ENCODE measurements at regions of chr1 and their contacts with region 1.

Region 1: GRCh38 chr1:206469933-206470691 is at the start of gene IKBKE:
- DNase-seq: no peak
- ATAC-seq: peak; percentile 73
- H3K4me3 ChIP-seq: peak within 1 kb of the TSS; percentile 94
- H3K27ac ChIP-seq: peak within 1 kb of the TSS; percentile 88
- H3K4me1 ChIP-seq: peaks cover 66% of the 10 kb centered on the region
- H3K27me3 ChIP-seq: no peaks in the 10 kb centered on the region
- CTCF ChIP-seq: peak; percentile 7 to 22 (median 17); a peak in 1 of 6 replicates
- EP300 ChIP-seq: no peak
- POLR2A ChIP-seq: peak; percentile 68
- RAD21 ChIP-seq: no peak
- polyA plus RNA-seq, gene IKBKE: 12.8 to 19.2 TPM

Region 2: GRCh38 chr1:206446688-206447421 is 23.3 kb before region 1 on chr1:
- CTCF ChIA-PET with region 1: interaction called, 3 read pairs
- POLR2A ChIA-PET with region 1: interaction called, 10 read pairs
- RAD21 ChIA-PET with region 1: no interaction called
- SMC1A ChIA-PET with region 1: no interaction called
- in situ Hi-C with region 1: no loop called
- intact Hi-C with region 1: no loop called
- DNase-seq: no peak
- ATAC-seq: no peak
- H3K4me3 ChIP-seq: no peak overlapping the region
- H3K27ac ChIP-seq: no peak overlapping the region
- H3K4me1 ChIP-seq: no peaks in the 10 kb centered on the region
- H3K27me3 ChIP-seq: no peaks in the 10 kb centered on the region
- CTCF ChIP-seq: no peak
- EP300 ChIP-seq: no peak
- POLR2A ChIP-seq: no peak
- RAD21 ChIP-seq: no peak

Region 3: DNA sequence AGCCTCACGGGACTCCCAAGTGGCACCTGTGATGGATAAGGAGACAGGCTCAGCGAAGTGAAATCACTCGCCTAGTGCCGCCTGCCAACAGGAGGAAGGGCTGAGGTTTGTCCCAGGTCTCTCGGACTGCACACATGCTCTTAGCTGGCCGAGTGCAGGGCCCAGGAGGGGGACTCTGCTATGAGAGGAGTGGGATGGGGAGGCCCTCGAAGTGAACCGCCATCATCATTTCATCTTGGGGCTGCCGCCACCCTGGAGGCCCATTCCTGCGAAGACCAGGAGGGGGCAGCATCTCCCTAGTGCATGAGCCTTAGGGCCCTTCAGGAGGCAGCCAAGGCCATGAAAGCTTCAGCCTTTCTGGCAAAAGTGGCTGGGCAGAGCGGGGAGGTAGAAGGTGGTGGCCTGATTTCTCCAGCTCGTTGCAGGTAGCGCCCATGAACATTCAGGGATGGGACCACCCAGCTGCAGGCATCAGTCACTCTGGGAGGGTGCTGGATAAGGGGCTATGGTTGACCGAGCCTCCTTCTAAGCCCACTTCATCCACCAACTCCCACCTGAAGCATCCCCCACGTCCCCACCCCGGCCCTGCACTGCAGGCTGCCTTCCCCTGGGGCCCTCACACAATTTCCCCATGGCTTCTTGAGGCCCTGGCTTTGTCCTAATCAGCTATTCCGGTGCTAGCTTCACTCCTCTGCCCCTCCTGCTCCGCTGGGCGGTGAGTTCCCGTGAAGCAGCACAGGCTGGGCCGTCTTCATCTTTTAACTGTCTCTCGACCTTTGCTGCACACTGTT is 20.1 kb after region 1 on chr1:
- CTCF ChIA-PET with region 1: interaction called, 199 read pairs
- POLR2A ChIA-PET with region 1: interaction called, 37 read pairs
- RAD21 ChIA-PET with region 1: interaction called, 32 read pairs
- SMC1A ChIA-PET with region 1: interaction called, 19 read pairs
- in situ Hi-C with region 1: no loop called
- intact Hi-C with region 1: no loop called
- DNase-seq: no peak
- ATAC-seq: peak; percentile 99
- H3K4me3 ChIP-seq: no peak overlapping the region
- H3K27ac ChIP-seq: no peak overlapping the region
- H3K4me1 ChIP-seq: peaks cover 5% of the 10 kb centered on the region
- H3K27me3 ChIP-seq: no peaks in the 10 kb centered on the region
- CTCF ChIP-seq: peak; percentile 91 to 97 (median 96)
- EP300 ChIP-seq: no peak
- POLR2A ChIP-seq: no peak
- RAD21 ChIP-seq: peak; percentile 97

Region 4: DNA sequence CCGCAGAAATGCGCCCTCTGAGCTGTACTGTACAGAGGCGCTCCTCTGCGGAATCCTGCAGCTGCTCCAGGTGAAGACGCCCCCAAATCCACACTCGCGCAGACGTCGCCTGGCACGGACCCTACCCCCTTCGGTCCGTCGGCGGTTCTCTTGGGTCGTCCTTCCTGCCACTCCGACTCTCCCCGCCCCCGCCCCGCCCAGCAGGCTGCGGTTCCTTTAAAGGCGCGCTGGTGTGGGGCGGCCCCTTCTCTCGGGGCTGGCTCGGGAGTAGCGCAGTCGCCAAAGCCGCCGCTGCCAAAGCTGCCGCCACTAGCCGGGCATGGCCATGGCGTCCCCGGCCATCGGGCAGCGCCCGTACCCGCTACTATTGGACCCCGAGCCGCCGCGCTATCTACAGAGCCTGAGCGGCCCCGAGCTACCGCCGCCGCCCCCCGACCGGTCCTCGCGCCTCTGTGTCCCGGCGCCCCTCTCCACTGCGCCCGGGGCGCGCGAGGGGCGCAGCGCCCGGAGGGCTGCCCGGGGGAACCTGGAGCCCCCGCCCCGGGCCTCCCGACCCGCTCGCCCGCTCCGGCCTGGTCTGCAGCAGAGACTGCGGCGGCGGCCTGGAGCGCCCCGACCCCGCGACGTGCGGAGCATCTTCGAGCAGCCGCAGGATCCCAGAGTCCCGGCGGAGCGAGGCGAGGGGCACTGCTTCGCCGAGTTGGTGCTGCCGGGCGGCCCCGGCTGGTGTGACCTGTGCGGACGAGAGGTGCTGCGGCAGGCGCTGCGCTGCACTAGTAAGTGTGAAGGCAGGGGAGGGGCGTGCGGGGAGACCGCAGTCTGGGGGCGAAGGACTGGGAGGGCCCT is 37.4 kb after region 1 on chr1 and contains the start of gene RASSF5:
- CTCF ChIA-PET with region 1: interaction called, 13 read pairs
- POLR2A ChIA-PET with region 1: interaction called, 8 read pairs
- RAD21 ChIA-PET with region 1: interaction called, 9 read pairs
- SMC1A ChIA-PET with region 1: interaction called, 22 read pairs
- in situ Hi-C with region 1: no loop called
- intact Hi-C with region 1: loop called (anchors 2 kb)
- DNase-seq: no peak
- ATAC-seq: peak; percentile 78
- H3K4me3 ChIP-seq: peak within 1 kb of the TSS; percentile 72
- H3K27ac ChIP-seq: peak within 1 kb of the TSS; percentile 29; the same call in 1 of the 2 replicates
- H3K4me1 ChIP-seq: peaks cover 41% of the 10 kb centered on the region
- H3K27me3 ChIP-seq: no peaks in the 10 kb centered on the region
- CTCF ChIP-seq: no peak
- EP300 ChIP-seq: 0 out of 4 replicates have a peak, but pooled peaks of 1 of the 2 experiments have one; percentile 21
- POLR2A ChIP-seq: peak; percentile 83
- RAD21 ChIP-seq: no peak
- polyA plus RNA-seq, gene RASSF5: 14.0 to 25.4 TPM

Region 5: GRCh38 chr1:206563367-206564207 is 93.5 kb after region 1 on chr1:
- CTCF ChIA-PET with region 1: interaction called, 4 read pairs
- POLR2A ChIA-PET with region 1: interaction called, 4 read pairs
- RAD21 ChIA-PET with region 1: interaction called, 10 read pairs
- SMC1A ChIA-PET with region 1: interaction called, 9 read pairs
- in situ Hi-C with region 1: no loop called
- intact Hi-C with region 1: loop called (anchors 5 kb)
- DNase-seq: no peak
- ATAC-seq: peak; percentile 9
- H3K4me3 ChIP-seq: peak overlapping the region; percentile 56
- H3K27ac ChIP-seq: peak overlapping the region; percentile 81
- H3K4me1 ChIP-seq: peaks cover 61% of the 10 kb centered on the region
- H3K27me3 ChIP-seq: no peaks in the 10 kb centered on the region
- CTCF ChIP-seq: no peak
- EP300 ChIP-seq: no peak
- POLR2A ChIP-seq: no peak
- RAD21 ChIP-seq: no peak

Measured in GM12878 (cell line).